Breast epithelium (tissue), 4 donors: ENCODE measurements at regions of chr14 and their contacts with region 1.

Region 1: DNA sequence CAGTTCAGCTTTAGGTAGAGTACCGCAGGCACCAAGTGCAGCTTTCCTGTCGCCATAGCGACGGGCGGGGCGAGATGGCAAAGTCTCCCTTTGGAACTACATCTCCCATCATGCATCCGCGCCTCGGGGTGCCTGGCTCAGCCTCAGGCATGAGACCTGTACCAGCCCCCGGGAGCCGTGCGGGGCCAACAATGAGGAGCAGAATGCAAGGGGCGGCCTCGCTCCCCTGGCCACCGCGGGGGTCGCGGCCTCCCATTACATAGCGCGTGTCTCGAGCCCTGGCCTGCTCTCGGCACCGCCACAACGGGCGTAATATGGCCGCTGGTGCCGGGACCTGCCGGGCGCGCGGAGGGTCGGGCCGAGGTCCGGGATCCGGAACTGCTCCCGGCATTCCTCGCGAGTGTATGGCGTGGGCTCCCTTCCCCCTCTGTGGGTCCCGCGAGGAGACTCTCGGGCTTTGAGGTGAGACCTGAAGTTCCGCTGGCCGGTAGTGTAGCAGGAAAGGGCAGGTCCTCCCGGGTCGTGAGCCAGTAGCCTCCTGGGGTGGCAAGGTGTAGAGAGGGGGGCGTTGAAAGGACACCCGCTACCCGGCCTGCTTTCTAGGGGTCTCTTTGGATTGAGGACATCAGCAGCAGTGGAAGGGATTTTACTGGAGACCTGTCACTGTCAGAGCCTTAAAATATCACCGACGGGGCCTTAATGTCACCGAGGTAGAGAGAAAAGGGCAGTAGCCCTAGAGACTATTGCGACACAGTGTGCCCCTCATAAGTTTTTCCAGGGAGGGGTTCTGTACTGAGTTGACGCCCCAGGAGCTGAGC is at the start of gene THTPA:
- DNase-seq: peak; percentile 80 to 84
- H3K4me3 ChIP-seq: peak within 1 kb of the TSS; percentile 75 to 97 (median 86)
- H3K27ac ChIP-seq: peak within 1 kb of the TSS; percentile 93
- H3K4me1 ChIP-seq: no peaks in the 10 kb centered on the region
- H3K27me3 ChIP-seq: no peaks in the 10 kb centered on the region
- CTCF ChIP-seq: peak in 1 of 3 donors; percentile 8
- POLR2A ChIP-seq: no peak
- total RNA-seq, gene THTPA: 13.6 to 22.1 (median 21.0) TPM

Region 2: DNA sequence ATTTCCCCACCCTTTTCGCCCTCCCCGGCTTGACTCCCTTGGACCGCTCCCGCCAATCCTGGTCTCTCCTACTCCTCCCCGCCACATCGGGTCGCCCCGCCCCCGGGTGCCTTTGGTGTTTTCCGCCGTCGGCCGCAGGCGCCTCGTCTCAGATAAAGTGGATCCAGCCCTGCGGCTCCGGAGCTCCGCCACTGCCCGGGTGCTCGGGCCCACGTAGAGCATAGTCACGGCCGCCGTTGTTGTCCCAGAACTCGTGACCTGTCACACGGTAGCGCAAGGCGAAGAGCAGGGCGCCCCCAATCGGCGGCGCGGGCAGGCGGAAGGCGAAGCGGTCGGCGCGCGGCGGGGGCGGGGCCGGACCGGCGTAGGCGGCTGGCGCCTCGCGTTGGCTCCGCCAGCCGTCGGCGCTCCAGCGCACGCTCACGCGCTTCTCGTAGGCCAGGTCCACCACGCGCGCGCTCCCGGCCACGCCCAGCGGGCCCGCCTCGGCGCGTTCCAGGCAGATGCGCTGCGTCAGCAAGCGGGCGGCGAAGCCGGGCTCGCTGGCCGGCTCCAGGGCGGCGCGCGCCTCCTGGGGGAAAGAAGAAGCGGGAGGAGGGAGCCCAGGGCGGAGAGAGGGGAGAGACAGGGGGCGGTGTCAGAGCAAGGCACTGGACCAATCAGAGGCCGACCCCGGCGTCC is 254.7 kb before region 1 on chr14:
- intact Hi-C with region 1: loop called (anchors 10 kb)
- DNase-seq: peak; percentile 96 to 98
- H3K4me3 ChIP-seq: peak overlapping the region; percentile 65 to 90 (median 86)
- H3K27ac ChIP-seq: peak overlapping the region; percentile 99
- H3K4me1 ChIP-seq: peaks cover 8 to 22% of the 10 kb centered on the region in 2 donors
- H3K27me3 ChIP-seq: no peaks in the 10 kb centered on the region
- CTCF ChIP-seq: peak; percentile 70 to 91 (median 78)
- POLR2A ChIP-seq: peak; percentile 41